Right ventricle myocardium inferior (tissue), 1 donor: ENCODE measurements at regions of chr5 and their contacts with region 1.

Region 1: GRCh38 chr5:115309751-115310370 is 13.4 kb upstream of the CCDC112 start:
- DNase-seq: no peak
- ATAC-seq: no peak

Region 2: GRCh38 chr5:115423541-115423940 is 113.7 kb after region 1 on chr5:
- intact Hi-C with region 1: no loop called
- DNase-seq: peak; percentile 76
- ATAC-seq: peak; percentile 96

Region 3: DNA sequence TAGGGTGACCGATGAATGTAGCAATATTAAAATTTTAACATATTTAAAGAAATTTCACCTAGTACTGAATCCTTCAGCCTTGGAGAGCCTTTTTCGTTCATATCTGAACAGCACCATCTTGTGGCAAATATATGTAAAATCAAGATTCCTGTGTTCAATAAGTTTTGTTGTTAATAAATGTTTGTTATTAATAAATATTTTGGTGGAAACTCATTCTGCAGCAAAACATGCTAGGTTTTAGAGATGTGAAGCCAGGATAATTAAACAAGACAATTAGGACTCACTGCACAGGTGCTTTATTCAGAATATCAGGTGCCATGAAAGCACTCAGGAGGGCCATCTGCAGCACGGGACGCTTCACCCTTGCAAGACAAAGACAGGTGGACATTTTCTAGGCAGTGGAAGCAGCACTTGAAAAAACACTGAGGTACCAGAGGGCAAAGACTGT is 276.8 kb after region 1 on chr5:
- intact Hi-C with region 1: loop called (anchors 2 kb)
- DNase-seq: no peak
- ATAC-seq: no peak

Region 4: DNA sequence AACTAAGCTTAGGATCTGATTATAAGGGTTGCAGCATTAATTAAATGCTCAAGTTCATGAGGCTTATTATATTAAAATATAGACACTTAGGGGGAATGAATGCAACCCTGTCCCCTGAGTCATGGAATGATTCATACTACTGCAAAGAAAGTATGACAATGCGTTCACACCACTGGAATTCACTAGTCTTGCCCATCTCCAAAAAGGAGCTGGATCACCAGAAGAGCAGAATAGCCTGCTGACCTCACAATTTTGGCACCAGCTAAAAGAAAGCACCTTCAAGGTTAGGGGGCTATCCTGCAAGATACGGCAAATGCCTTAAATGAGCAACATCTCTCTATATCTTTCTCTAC is 348.0 kb after region 1 on chr5:
- intact Hi-C with region 1: no loop called
- DNase-seq: no peak
- ATAC-seq: no peak

Region 5: GRCh38 chr5:116076496-116076895 is 766.6 kb after region 1 on chr5:
- intact Hi-C with region 1: loop called (anchors 10 kb)
- DNase-seq: no peak
- ATAC-seq: peak; percentile 16